Dendritic cell treated with granulocyte-macrophage colony-stimulating factor and Interleukin-4, amounts not matched to agents 40 ng/mL and 50 ng/mL, for 4 days (primary cell): ENCODE measurements at regions of chr10 and their contacts with region 1.

Region 1: GRCh38 chr10:99612167-99612831 is 7.9 kb downstream of the SLC25A28 start:
- H3K4me3 Mint-ChIP-seq: no peak overlapping the region
- H3K27ac Mint-ChIP-seq: no peak overlapping the region
- H3K4me1 Mint-ChIP-seq: peaks cover 23% of the 10 kb centered on the region
- H3K27me3 Mint-ChIP-seq: no peaks in the 10 kb centered on the region

Region 2: GRCh38 chr10:99315853-99316252 is 296.4 kb before region 1 on chr10:
- intact Hi-C with region 1: no loop called
- H3K4me3 Mint-ChIP-seq: no peak overlapping the region
- H3K27ac Mint-ChIP-seq: no peak overlapping the region
- H3K4me1 Mint-ChIP-seq: no peaks in the 10 kb centered on the region
- H3K27me3 Mint-ChIP-seq: peaks cover 8% of the 10 kb centered on the region

Region 3: GRCh38 chr10:99394761-99395386 is 217.4 kb before region 1 on chr10:
- intact Hi-C with region 1: loop called (anchors 2 kb)
- H3K4me3 Mint-ChIP-seq: no peak overlapping the region
- H3K27ac Mint-ChIP-seq: no peak overlapping the region
- H3K4me1 Mint-ChIP-seq: peaks cover 12% of the 10 kb centered on the region
- H3K27me3 Mint-ChIP-seq: peaks cover 6% of the 10 kb centered on the region

Region 4: DNA sequence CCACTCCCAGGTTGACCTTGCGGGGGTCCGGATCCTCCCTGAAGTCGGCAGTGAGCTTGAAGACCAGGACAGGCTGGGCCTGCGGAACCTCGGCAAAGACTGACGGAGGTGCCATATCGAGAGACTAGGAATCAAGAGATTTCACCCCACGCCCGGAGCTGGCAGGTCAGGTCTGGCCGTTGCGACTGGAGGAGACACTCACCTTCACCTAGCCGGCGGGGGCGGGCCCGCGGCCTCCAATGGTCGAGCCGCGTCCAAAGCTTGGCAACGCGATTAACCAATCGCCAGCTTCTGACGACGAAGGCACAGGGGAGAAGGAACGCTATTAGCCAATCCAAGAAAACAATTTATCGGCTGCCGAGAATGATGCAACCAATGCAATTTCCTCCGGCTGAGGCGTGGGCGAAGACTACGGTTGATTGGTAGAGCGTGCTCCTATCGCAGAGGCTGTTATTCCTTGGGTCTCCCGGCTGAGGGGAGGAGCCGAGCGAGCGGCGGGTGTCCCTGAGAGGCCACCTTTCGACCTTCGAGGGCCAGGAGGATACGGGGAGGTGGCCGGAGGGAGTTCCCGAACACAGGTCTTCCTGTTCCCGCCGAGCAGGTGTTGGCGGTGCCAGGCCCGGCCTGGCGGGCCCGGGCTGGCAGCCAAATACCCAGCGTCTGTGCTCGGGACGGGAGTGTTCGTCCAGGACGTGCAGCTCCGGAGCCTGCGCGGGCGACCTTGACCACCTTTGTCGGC is 181.7 kb before region 1 on chr10 and contains the start of gene GOT1:
- intact Hi-C with region 1: loop called (anchors 2 kb)
- H3K4me3 Mint-ChIP-seq: peak within 1 kb of the TSS; percentile 94
- H3K27ac Mint-ChIP-seq: peak within 1 kb of the TSS; percentile 98
- H3K4me1 Mint-ChIP-seq: peaks cover 46% of the 10 kb centered on the region
- H3K27me3 Mint-ChIP-seq: no peaks in the 10 kb centered on the region

Region 5: DNA sequence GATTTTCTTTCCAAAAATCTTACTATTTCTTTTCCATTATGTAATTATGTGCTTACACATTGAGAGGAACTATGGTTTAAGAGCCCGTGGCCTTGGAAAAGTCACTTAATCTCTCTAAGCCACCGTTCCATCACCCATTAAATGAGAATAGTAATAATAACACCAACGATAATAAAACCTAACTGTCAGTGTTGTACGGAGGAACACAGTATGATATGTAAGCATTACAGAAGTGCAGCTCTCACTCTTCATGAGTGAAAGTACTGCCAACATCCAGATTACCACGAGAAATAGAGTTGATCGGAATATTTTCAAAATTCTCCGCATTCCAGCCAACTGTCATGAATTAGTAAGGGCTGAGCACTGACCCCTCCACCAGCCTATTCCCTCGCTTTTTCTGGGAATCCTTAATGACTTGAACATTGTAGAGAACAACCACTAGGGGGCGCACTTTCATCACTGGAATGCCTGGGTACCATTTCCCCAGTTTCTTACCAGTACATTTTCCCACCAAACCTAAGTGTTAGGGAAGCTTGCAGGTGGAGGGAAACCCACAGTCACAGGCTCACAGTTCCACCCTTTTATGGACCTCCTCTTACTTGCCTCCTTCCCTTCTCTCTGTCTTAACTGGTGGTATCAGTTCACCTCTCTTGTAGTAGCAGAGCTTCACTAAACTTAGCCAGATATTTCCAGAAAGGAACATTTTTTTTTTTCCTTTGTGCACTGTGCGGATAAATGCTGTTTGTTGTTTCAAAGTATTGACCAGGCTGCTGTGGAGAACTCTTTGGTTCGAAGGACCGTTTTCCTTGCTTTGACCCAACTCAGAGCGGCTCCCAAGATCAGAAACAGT is 51.8 kb before region 1 on chr10:
- intact Hi-C with region 1: loop called (anchors 1 kb)
- H3K4me3 Mint-ChIP-seq: no peak overlapping the region
- H3K27ac Mint-ChIP-seq: no peak overlapping the region
- H3K4me1 Mint-ChIP-seq: no peaks in the 10 kb centered on the region
- H3K27me3 Mint-ChIP-seq: no peaks in the 10 kb centered on the region